ENCODE measurements at regions of chr1 and their contacts with region 1.

Region 1: DNA sequence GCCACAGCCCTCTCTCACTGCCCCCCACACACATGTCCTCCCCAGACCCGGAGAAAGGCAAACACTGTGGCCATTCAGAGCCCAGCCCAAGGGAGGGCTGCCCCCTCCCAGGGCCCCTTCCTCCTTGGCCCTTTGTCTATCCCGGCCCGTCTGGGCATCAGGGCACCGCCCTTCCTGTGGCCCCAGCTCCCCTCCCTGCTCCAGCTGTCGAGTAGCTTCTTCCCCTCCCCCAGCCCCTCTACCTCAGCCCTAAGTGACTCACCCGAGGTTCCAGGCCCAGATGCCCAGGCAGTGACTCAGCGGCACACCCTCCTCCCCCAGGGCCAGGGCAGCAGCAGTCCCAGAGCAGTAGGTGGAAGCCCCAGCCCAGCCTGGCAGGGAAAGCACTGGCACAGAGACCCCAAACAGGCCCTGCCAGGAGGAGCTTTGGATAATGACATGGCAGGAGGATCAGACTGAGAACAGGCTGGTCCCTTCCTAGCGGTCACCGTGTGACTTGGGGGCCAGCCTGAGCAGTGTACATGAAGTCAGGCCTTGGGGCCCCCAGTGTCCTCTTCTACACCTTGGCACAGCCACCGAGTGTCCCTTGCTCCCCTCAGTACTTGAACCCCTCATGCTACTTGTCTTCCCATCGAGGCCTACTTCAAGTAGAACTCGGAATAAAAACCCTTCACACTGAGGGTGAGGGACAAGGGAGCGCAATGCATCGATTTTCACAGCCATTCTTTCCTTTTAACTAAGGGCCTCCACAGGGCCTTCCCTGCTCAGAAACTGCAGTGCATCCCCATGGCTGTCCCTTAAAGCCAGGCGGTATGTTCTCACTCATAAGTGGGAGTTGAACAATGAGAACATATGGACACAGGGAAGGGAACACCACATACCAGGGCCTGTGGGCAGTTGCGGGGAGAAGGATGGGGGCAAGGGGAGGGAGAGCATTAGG is 1.1 kb upstream of the S100A2 start:
- DNase-seq: peak; percentile 96 to 98
- H3K4me3 ChIP-seq: peak overlapping the region; percentile 34; the same call in 1 of the 2 replicates
- H3K27ac ChIP-seq: peak overlapping the region; percentile 97
- H3K4me1 ChIP-seq: peaks cover 56% of the 10 kb centered on the region
- H3K27me3 ChIP-seq: no peaks in the 10 kb centered on the region
- CTCF ChIP-seq: no peak

Region 2: GRCh38 chr1:153422450-153423068 is 144.2 kb before region 1 on chr1:
- CTCF ChIA-PET with region 1: no interaction called
- POLR2A ChIA-PET with region 1: no interaction called
- intact Hi-C with region 1: no loop called
- DNase-seq: peak; percentile 47 to 49
- H3K4me3 ChIP-seq: no peak overlapping the region
- H3K27ac ChIP-seq: no peak overlapping the region
- H3K4me1 ChIP-seq: no peaks in the 10 kb centered on the region
- H3K27me3 ChIP-seq: peaks cover 59% of the 10 kb centered on the region
- CTCF ChIP-seq: no peak

Region 3: DNA sequence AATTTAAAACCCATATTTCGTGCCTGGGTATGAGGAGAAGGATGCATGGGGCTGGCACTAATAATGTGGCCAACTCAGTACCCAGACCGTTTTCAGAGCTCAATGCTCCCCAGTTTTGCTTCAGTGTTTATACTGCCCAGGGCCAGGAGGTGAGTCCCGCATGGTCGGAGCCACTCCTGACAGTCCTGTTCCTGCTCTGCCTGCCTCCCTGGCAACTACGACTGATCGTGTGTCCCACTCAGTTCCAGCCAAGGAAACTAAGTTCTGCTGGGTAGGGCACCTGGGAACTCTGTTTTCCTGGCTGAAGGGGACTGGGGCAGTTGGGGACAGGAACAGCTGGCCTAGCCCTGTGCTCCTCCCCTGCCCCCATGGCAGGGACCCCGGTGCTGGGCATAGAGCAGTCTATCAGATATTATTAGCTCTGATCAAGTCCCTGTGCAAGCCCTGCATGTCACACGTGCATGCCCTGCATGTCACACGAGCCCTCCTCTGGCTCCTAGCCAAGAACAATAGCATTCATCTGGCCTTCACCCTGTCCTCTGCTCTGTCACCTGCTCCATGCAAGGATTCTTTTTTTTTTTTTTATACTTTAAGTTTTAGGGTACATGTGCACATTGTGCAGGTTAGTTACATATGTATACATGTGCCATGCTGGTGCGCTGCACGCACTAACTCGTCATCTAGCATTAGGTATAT is 125.3 kb before region 1 on chr1:
- CTCF ChIA-PET with region 1: interaction called, 17 read pairs
- POLR2A ChIA-PET with region 1: no interaction called
- intact Hi-C with region 1: no loop called
- DNase-seq: no peak
- H3K4me3 ChIP-seq: no peak overlapping the region
- H3K27ac ChIP-seq: no peak overlapping the region
- H3K4me1 ChIP-seq: no peaks in the 10 kb centered on the region
- H3K27me3 ChIP-seq: peaks cover 69% of the 10 kb centered on the region
- CTCF ChIP-seq: no peak

Region 4: GRCh38 chr1:153520230-153520629 is 46.5 kb before region 1 on chr1:
- CTCF ChIA-PET with region 1: interaction called, 10 read pairs
- POLR2A ChIA-PET with region 1: interaction called, 17 read pairs
- intact Hi-C with region 1: loop called (anchors 1 kb)
- DNase-seq: no peak
- H3K4me3 ChIP-seq: no peak overlapping the region
- H3K27ac ChIP-seq: no peak overlapping the region
- H3K4me1 ChIP-seq: peaks cover 31% of the 10 kb centered on the region
- H3K27me3 ChIP-seq: no peaks in the 10 kb centered on the region
- CTCF ChIP-seq: no peak

Region 5: GRCh38 chr1:153545067-153546055 is 21.3 kb before region 1 on chr1 and contains the start of gene S100A4:
- CTCF ChIA-PET with region 1: interaction called, 13 read pairs
- POLR2A ChIA-PET with region 1: interaction called, 26 read pairs
- intact Hi-C with region 1: loop called (anchors 2 kb)
- DNase-seq: peak; percentile 91 to 98
- H3K4me3 ChIP-seq: peak within 1 kb of the TSS; percentile 61
- H3K27ac ChIP-seq: peak within 1 kb of the TSS; percentile 67
- H3K4me1 ChIP-seq: peaks cover 91% of the 10 kb centered on the region
- H3K27me3 ChIP-seq: no peaks in the 10 kb centered on the region
- CTCF ChIP-seq: no peak
- total RNA-seq, gene S100A4: 303 and 346 TPM in 2 replicates